Sciatic nerve (tissue), 2 donors: ENCODE measurements at regions of chr7 and their contacts with region 1.

Region 1: DNA sequence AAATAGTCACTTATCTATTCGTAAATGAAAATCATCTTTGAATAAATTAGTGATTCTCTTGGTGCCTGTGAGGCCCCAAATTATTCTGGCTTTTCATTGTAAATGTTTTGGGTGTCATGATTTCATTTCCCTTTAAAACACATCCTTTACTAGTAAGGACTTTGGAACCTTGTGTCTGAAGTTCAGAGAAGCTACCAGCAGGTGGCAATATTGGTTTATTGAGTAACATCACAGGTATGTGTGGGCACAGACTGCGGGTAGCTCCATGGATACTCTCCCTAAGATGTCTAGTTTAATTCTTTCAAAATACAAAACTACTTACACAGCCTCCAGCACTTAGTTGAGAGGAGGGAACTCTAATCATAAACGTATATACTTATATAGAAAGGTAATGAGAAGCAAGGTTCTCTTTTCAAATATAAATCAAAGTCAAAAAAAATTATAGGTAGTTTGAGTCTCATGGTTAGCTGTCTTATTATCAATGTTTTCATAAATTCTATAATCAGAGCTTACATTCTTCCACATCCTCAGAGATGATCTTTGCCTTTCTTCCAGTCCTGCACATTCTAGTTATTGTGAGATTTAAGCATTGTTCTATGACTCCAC is 449.6 kb downstream of the GRM8 start:
- DNase-seq: no peak
- ATAC-seq: no peak

Region 2: GRCh38 chr7:126819197-126819484 is 16.0 kb after region 1 on chr7:
- intact Hi-C with region 1: loop called (anchors 1 kb)
- DNase-seq: no peak
- ATAC-seq: no peak